Panc1 (cell line): ENCODE measurements at regions of chr17 and their contacts with region 1.

Region 1: GRCh38 chr17:29219378-29220047 is 27.1 kb upstream of the CRYBA1 start:
- DNase-seq: peak; percentile 41
- ATAC-seq: peak; percentile 95
- H3K4me3 ChIP-seq: peak overlapping the region in 1 of 2 experiments; percentile 24; a peak in 2 of 4 replicates
- H3K27ac ChIP-seq: peak overlapping the region; percentile 58; the same call in 1 of the 2 replicates
- H3K4me1 ChIP-seq: peaks cover 6% of the 10 kb centered on the region
- H3K27me3 ChIP-seq: no peaks in the 10 kb centered on the region
- CTCF ChIP-seq: peak; percentile 94

Region 2: DNA sequence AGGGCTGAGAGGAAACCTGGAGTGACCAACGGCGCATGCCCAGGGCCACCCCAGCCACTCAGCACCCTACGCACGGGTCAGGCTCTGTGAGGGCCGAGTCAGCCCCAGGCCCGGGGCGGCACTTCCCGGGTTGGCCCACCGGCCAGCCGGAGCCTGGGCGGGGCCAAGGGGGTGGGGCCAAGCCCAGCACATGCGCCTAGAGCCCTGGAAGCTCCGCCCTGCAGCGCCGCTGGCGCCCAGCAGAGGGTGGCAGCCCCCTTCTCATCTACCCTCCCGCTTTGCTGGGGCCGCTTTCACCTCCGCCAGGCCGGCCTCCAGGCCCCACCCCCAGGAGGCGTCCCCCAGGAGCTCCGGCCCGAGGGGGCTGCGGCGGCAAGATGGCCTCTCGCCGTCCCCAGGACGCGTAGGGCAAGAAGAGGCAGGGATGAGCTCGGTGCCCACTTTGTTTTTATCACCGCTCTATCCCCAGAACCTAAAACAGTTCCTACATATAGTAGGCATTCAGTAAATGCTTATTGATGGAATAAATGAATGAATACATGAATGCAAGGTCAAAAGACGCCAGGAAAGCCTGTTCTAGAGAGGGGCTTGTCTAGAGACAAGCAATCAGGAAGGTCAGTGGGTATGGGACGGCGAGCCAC is 70.6 kb before region 1 on chr17:
- CTCF ChIA-PET with region 1: interaction called, 25 read pairs
- POLR2A ChIA-PET with region 1: interaction called, 3 read pairs
- in situ Hi-C with region 1: no loop called
- intact Hi-C with region 1: loop called (anchors 2 kb)
- DNase-seq: peak; percentile 63
- ATAC-seq: peak; percentile 90
- H3K4me3 ChIP-seq: peak overlapping the region; percentile 39 to 53
- H3K27ac ChIP-seq: peak overlapping the region; percentile 97
- H3K4me1 ChIP-seq: peaks cover 82% of the 10 kb centered on the region
- H3K27me3 ChIP-seq: no peaks in the 10 kb centered on the region
- CTCF ChIP-seq: peak; percentile 97

Region 3: DNA sequence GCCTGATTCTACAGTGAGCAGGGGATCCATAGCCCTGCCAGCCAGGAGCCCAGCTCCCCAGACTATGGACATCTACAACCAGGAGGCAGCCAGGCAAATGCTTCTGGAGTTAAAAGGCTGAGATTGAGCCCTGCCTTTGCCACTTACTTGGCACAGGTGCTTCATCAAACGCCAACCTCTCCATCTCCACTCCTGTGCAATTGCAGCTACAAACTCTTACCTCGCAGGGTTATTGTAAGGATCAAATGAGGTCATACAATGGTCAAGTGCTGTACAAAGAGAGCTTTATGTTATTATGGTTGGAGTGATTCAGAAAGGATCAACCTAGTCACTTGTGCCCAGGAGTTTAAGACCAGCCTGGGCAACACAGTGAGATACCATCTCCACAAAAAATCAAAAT is 29.5 kb before region 1 on chr17:
- CTCF ChIA-PET with region 1: interaction called, 4 read pairs
- POLR2A ChIA-PET with region 1: interaction called, 11 read pairs
- in situ Hi-C with region 1: no loop called
- intact Hi-C with region 1: no loop called
- DNase-seq: no peak
- ATAC-seq: no peak
- H3K4me3 ChIP-seq: no peak overlapping the region
- H3K27ac ChIP-seq: no peak overlapping the region
- H3K4me1 ChIP-seq: no peaks in the 10 kb centered on the region
- H3K27me3 ChIP-seq: no peaks in the 10 kb centered on the region
- CTCF ChIP-seq: no peak

Region 4: GRCh38 chr17:29207979-29208378 is 11.5 kb before region 1 on chr17:
- CTCF ChIA-PET with region 1: interaction called, 15 read pairs
- POLR2A ChIA-PET with region 1: interaction called, 3 read pairs
- in situ Hi-C with region 1: no loop called
- intact Hi-C with region 1: no loop called
- DNase-seq: no peak
- ATAC-seq: no peak
- H3K4me3 ChIP-seq: no peak overlapping the region
- H3K27ac ChIP-seq: no peak overlapping the region
- H3K4me1 ChIP-seq: no peaks in the 10 kb centered on the region
- H3K27me3 ChIP-seq: no peaks in the 10 kb centered on the region
- CTCF ChIP-seq: no peak